ENCODE measurements at regions of chr15 and their contacts with region 1.

Region 1: GRCh38 chr15:60397772-60398445 is at the start of gene ANXA2:
- DNase-seq: peak; percentile 49 to 85 (median 62)
- ATAC-seq: peak; percentile 81
- H3K4me3 ChIP-seq: peak within 1 kb of the TSS; percentile 72
- H3K4me3 Mint-ChIP-seq: peak within 1 kb of the TSS; percentile 83 to 98 (median 87)
- H3K27ac ChIP-seq: peak within 1 kb of the TSS; percentile 61
- H3K27ac Mint-ChIP-seq: peak within 1 kb of the TSS; percentile 87 to 98 (median 95)
- H3K4me1 ChIP-seq: peaks cover 6 to 32% of the 10 kb centered on the region in 2 donors
- H3K4me1 Mint-ChIP-seq: peaks cover 10 to 67% (median 33%) of the 10 kb centered on the region in 7 donors
- H3K27me3 ChIP-seq: no peaks in the 10 kb centered on the region
- H3K27me3 Mint-ChIP-seq: peaks cover 0 to 7% (median 0%) of the 10 kb centered on the region in 5 donors
- total RNA-seq, gene ANXA2: 28.8 to 377 (median 42.4) TPM

Region 2: DNA sequence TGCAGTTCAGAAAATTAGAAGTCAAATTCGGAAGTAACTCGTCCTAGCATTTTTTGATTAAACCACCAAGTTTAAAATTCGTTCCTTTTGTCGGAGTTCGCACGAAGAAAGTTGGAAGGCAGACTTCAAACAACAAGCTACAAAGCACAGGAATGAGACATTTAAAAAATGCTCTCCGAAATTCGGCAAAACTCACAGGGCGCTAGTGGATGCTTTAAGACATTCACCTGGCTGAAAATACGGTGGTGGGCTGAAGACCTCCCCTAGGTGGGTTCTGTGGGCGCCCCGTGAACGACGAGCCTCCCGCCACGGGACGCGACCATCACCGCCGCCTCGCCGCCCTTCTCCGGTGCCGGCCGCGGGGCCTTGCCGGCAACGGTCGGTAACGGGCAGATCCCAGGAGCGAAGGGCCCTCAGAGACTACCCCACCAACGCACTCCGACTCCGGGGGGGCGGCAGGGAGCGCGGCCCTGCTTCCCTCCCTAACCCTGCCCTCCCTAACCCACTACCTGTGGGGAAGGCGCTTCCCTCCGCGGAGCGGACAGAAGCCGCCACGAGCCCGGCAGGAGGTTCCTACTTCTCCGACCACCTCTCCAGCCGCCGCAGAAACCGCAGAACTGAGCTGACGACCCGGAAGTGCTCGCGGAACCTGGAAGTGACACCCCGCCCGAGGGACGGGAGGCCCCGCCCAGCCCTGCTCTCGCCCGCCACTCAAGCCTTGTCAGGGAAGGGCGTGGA is 740.8 kb before region 1 on chr15 and contains the start of gene GTF2A2:
- CTCF ChIA-PET with region 1: no interaction called
- POLR2A ChIA-PET with region 1: no interaction called
- intact Hi-C with region 1: loop called in 1 of 2 experiments (anchors 1 kb)
- DNase-seq: peak; percentile 81 to 95 (median 89)
- ATAC-seq: peak; percentile 99
- H3K4me3 ChIP-seq: peak within 1 kb of the TSS; percentile 77
- H3K4me3 Mint-ChIP-seq: peak within 1 kb of the TSS in 7 of 10 donors; percentile 18 to 52 (median 26)
- H3K27ac ChIP-seq: peak within 1 kb of the TSS; percentile 89
- H3K27ac Mint-ChIP-seq: peak within 1 kb of the TSS in 4 of 9 donors; percentile 76 to 88 (median 78)
- H3K4me1 ChIP-seq: peaks cover 18% of the 10 kb centered on the region in 2 donors
- H3K4me1 Mint-ChIP-seq: peaks cover 4 to 17% (median 11%) of the 10 kb centered on the region in 7 donors
- H3K27me3 ChIP-seq: no peaks in the 10 kb centered on the region
- H3K27me3 Mint-ChIP-seq: no peaks in the 10 kb centered on the region
- total RNA-seq, gene GTF2A2: 46.6 to 124 (median 50.1) TPM

Region 3: GRCh38 chr15:60408438-60409105 is 10.7 kb after region 1 on chr15:
- CTCF ChIA-PET with region 1: interaction called, 4 read pairs
- POLR2A ChIA-PET with region 1: interaction called, 17 read pairs
- intact Hi-C with region 1: loop called in 1 of 2 experiments (anchors 1 kb)
- DNase-seq: peak in 4 of 9 donors; percentile 5 to 11 (median 9)
- ATAC-seq: peak; percentile 90
- H3K4me3 ChIP-seq: no peak overlapping the region
- H3K4me3 Mint-ChIP-seq: peak overlapping the region in 2 of 10 donors; percentile 9 to 75
- H3K27ac ChIP-seq: no peak overlapping the region
- H3K27ac Mint-ChIP-seq: peak overlapping the region in 5 of 9 donors; percentile 10 to 83 (median 23)
- H3K4me1 ChIP-seq: peaks cover 5 to 18% of the 10 kb centered on the region in 2 donors
- H3K4me1 Mint-ChIP-seq: peaks cover 8 to 12% (median 9%) of the 10 kb centered on the region in 7 donors
- H3K27me3 ChIP-seq: no peaks in the 10 kb centered on the region
- H3K27me3 Mint-ChIP-seq: peaks cover 0 to 7% (median 0%) of the 10 kb centered on the region in 5 donors

Region 4: DNA sequence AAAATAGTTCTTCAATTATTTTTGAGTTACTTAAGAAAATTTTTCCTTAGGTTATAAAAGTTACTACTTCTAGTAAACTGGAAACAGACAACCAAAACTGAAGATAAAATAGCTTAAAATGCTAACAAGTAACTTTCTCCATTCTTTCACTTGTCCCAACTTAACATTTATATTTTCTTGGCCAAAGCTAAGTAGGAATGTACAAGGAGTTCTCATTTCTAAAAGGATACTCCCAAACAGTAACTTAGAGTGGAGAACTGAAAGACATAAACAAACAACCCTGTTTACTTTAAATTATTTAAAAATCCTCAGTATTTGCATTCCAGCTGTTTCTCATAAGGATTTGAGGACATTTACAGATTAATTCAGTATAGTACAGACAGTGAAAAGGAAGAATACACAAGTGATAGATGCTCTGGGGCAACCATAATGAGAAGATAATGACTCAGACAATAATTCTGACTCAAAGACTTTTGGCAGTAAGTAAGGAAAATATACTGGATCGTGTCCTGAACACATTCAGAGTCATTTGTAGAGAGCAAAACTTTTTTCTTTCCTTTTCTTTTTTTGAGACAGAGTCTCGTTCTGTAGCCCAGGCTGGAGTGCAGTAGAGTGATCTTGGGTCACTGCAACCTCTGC is 29.1 kb after region 1 on chr15:
- CTCF ChIA-PET with region 1: no interaction called
- POLR2A ChIA-PET with region 1: interaction called, 6 read pairs
- intact Hi-C with region 1: loop called in 1 of 2 experiments (anchors 5 kb)
- DNase-seq: no peak
- ATAC-seq: no peak
- H3K4me3 ChIP-seq: no peak overlapping the region
- H3K4me3 Mint-ChIP-seq: no peak overlapping the region
- H3K27ac ChIP-seq: no peak overlapping the region
- H3K27ac Mint-ChIP-seq: peak overlapping the region in 1 of 9 donors; percentile 20
- H3K4me1 ChIP-seq: no peaks in the 10 kb centered on the region
- H3K4me1 Mint-ChIP-seq: peaks cover 0 to 18% (median 3%) of the 10 kb centered on the region in 7 donors
- H3K27me3 ChIP-seq: no peaks in the 10 kb centered on the region
- H3K27me3 Mint-ChIP-seq: no peaks in the 10 kb centered on the region